H1 (cell line): ENCODE measurements at regions of chr21 and their contacts with region 1.

Region 1: DNA sequence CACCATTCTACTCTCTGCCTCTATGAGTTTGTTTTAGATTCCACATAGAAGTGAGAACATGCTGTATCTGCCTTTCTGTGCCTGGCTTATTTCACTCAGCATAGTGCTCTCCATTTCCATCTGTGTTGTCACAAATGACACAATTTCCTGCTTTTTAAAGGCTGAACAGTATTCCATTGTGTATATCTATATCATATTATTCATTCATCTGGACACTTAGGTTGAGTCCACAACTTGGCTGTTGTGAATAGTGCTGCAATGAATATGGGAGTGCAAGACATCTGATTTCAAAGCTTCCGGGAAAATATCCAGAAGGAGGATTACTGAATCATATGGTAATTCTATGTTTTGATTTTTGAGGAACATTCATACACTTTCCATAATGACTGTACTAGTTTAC is 20.1 kb upstream of the DONSON start:
- DNase-seq: no peak
- H3K4me3 ChIP-seq: no peak overlapping the region
- H3K27ac ChIP-seq: no peak overlapping the region
- H3K4me1 ChIP-seq: no peaks in the 10 kb centered on the region
- H3K27me3 ChIP-seq: no peaks in the 10 kb centered on the region
- CTCF ChIP-seq: no peak
- EP300 ChIP-seq: no peak
- POLR2A ChIP-seq: no peak
- RAD21 ChIP-seq: no peak

Region 2: DNA sequence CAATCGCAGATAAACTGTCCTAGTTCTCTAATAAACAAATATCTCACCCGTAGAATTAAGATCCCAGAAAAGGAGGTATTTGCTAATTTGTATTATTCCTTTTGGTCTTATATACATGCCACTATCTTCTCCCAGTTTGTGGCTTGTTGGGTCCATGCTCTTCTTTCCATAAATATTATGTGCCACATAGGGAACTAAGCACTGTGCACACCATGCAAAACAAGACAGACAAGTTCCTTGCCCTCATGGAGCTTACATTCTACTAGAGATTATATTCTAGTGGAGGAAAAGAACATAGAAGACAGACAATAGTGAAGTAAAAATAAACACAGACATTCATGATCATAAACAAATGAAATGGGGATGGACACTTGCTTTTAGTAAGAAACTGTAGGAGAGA is 71.3 kb before region 1 on chr21:
- CTCF ChIA-PET with region 1: no interaction called
- POLR2A ChIA-PET with region 1: no interaction called
- DNase-seq: no peak
- H3K4me3 ChIP-seq: no peak overlapping the region
- H3K27ac ChIP-seq: no peak overlapping the region
- H3K4me1 ChIP-seq: peaks cover 0 to 2% (median 0%) of the 10 kb centered on the region in 4 experiments; a peak in 3 of 7 replicates
- H3K27me3 ChIP-seq: no peaks in the 10 kb centered on the region
- CTCF ChIP-seq: no peak
- EP300 ChIP-seq: no peak
- POLR2A ChIP-seq: no peak
- RAD21 ChIP-seq: no peak

Region 3: GRCh38 chr21:33572350-33572749 is 36.2 kb before region 1 on chr21:
- CTCF ChIA-PET with region 1: interaction called, 18 read pairs
- POLR2A ChIA-PET with region 1: interaction called, 4 read pairs
- DNase-seq: no peak
- H3K4me3 ChIP-seq: no peak overlapping the region
- H3K27ac ChIP-seq: no peak overlapping the region
- H3K4me1 ChIP-seq: no peaks in the 10 kb centered on the region
- H3K27me3 ChIP-seq: no peaks in the 10 kb centered on the region
- CTCF ChIP-seq: no peak
- EP300 ChIP-seq: no peak
- POLR2A ChIP-seq: no peak
- RAD21 ChIP-seq: no peak

Region 4: DNA sequence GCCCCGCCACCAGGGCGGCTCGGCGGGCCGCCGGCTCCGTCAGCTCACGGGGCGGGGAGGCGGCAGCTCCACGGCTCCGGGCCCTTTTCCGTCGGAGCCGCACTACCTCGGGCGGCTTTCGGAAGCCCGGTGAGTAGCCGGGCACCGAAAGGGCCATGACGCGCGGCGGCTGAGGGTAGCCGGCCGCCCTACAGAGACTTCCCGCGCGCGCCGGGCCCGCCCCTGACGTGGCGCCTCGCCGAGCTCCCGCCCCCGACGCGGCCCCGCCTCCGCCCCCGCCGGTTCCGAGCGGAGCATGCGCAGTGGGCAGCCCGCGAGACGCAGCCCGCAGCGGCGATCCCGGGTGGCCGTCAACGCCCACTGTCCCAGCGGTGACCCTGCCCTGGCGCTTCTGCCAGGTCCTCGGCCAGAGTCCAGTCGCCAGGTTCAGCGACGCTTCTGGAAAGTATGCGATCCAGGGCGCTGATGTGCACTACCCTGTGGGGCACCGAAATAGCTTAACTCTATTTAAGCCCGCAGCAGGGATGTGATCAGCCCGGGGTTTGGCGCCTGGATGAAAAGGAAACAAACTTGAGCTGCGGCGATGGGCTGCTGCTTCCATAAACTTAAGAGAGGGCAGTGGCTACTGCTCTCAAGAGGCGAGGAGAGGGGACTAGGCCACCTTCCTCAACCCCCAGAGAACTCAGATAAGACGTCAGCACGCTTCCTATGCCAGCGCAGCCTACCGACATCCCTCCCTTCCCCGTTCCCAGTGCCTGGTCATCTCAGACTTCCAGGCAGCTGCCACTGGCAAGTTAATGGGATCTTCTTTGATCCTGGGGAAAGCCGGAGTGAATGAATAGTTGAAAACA is 19.8 kb before region 1 on chr21 and contains the start of gene DONSON:
- CTCF ChIA-PET with region 1: interaction called, 15 read pairs
- POLR2A ChIA-PET with region 1: interaction called, 8 read pairs
- DNase-seq: peak in 1 of 2 experiments; percentile 98
- H3K4me3 ChIP-seq: peak within 1 kb of the TSS; percentile 66 to 90 (median 88)
- H3K27ac ChIP-seq: peak within 1 kb of the TSS; percentile 72; the same call in 1 of the 2 replicates
- H3K4me1 ChIP-seq: peaks cover 0 to 2% (median under 1%) of the 10 kb centered on the region in 4 experiments; a peak in 2 of 7 replicates
- H3K27me3 ChIP-seq: no peaks in the 10 kb centered on the region
- CTCF ChIP-seq: no peak
- EP300 ChIP-seq: no peak
- POLR2A ChIP-seq: peak; percentile 37 to 66
- RAD21 ChIP-seq: no peak
- total RNA-seq, gene DONSON: 27.9 and 32.5 TPM in 2 replicates

Region 5: GRCh38 chr21:33619726-33620125 is 11.2 kb after region 1 on chr21:
- CTCF ChIA-PET with region 1: interaction called, 14 read pairs
- POLR2A ChIA-PET with region 1: interaction called, 6 read pairs
- DNase-seq: no peak
- H3K4me3 ChIP-seq: no peak overlapping the region
- H3K27ac ChIP-seq: no peak overlapping the region
- H3K4me1 ChIP-seq: no peaks in the 10 kb centered on the region
- H3K27me3 ChIP-seq: no peaks in the 10 kb centered on the region
- CTCF ChIP-seq: no peak
- EP300 ChIP-seq: no peak
- POLR2A ChIP-seq: no peak
- RAD21 ChIP-seq: no peak